ENCODE measurements at regions of chr5 and their contacts with region 1.

Region 1: GRCh38 chr5:149442563-149443182 is 63.6 kb upstream of the IL17B start:
- DNase-seq: peak; percentile 92

Region 2: DNA sequence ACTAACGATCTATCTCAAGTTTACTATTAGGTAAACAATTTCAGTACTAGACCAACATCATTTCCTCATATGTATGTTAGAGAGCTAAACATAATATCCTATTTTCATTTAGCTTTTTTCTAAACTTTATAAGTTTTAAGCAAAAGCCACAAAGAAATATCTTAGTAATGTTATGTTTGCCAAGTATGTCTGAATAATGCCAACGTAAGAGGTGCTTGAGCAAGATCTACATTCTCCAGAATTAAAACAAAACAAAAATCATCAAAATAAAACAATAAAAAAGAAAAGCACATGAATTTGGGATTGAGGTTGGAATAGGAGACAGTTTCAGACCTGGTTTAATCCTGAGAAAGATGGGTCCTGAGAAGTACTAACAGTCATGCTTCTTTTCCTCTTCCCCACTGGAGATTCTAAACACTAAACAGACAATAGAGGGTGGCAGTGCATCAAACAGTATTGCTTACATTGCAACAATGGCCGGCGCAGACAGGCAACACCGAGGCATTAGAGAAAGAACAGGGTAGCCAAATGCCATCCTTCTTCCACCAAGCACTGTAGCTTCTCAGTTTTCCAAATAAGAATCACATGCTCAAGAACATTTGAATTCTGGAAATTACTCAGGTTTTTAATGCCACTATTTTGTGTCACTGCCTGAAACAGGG is 74.9 kb after region 1 on chr5:
- intact Hi-C with region 1: no loop called
- DNase-seq: no peak

Region 3: DNA sequence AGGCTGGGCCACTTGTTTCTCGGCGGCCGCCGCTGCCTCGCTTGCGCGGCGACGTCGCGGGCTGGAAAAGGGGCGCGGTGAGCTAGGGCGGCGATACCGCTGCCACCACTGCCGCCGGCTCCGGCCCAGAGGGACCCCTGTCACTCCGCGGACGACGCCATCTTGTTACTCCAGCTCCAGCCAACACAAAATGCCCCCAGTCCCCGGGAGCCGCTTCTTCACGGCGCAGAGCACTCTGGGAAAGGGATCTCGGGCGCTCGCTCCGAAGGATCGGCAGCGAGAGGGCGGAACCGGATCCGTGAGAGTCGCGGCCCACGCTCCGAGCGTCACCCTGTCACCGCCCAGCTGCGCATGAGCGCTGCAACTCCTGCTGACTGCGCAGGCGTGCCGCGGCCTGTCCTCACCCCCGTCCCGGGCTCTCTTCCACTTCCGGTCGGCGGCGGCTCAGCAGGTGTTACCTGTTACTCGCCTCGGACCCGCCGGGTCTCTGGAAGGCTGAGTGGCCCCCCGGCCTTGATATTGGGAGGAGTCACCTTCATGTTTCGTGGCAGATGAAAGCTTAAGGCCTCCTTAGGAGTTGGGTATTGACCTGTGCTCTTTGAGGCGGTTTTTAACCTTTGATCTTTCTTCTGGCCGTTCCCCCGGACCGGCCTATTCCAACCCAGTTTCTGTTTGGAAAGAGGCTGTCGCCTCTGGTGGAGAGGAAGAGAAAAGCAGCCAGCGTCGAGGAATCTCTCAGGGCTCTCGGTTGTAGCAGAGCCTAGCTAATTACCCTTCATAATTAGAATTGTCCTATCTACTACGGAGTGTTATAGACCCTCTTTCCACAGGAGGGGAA is 108.7 kb after region 1 on chr5 and contains the start of gene CSNK1A1:
- intact Hi-C with region 1: loop called (anchors 1 kb)
- DNase-seq: peak; percentile 99
- total RNA-seq, gene CSNK1A1: 206 TPM

Measured in cardiac septum (tissue), 1 donor.